ENCODE measurements at regions of chr18 and their contacts with region 1.

Region 1: GRCh38 chr18:22800551-22800951 is 132.6 kb upstream of the RBBP8 start:
- DNase-seq: no peak
- ATAC-seq: no peak
- H3K4me3 ChIP-seq: no peak overlapping the region
- H3K4me3 Mint-ChIP-seq: no peak overlapping the region
- H3K27ac ChIP-seq: no peak overlapping the region
- H3K27ac Mint-ChIP-seq: no peak overlapping the region
- H3K4me1 ChIP-seq: no peaks in the 10 kb centered on the region
- H3K4me1 Mint-ChIP-seq: no peaks in the 10 kb centered on the region
- H3K27me3 ChIP-seq: peaks cover 0 to 2% (median 0%) of the 10 kb centered on the region in 4 experiments
- H3K27me3 Mint-ChIP-seq: no peaks in the 10 kb centered on the region
- CTCF ChIP-seq: no peak

Region 2: DNA sequence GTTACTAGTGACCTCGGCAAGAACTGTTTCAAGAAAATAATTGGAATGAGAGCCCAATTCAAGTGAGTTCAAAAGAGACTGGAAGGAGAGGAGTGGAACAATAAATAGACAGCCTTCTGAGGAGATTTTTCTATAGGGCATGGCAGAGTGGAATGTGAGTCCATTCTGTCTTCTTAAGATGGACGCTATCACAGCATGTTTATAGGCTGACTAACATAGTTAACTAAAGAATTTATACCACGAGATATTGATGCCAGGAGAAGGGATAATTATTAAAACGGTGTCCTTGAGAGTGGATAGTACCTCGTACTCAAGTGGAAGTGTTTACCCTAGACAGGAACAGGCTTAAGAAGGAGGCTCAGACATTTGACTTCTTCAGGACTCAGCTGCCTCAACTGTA is 11.0 kb before region 1 on chr18:
- CTCF ChIA-PET with region 1: interaction called, 14 read pairs
- POLR2A ChIA-PET with region 1: no interaction called
- intact Hi-C with region 1: no loop called
- DNase-seq: no peak
- ATAC-seq: no peak
- H3K4me3 ChIP-seq: no peak overlapping the region
- H3K4me3 Mint-ChIP-seq: peak overlapping the region; percentile 20
- H3K27ac ChIP-seq: no peak overlapping the region
- H3K27ac Mint-ChIP-seq: no peak overlapping the region
- H3K4me1 ChIP-seq: peaks cover 25 to 28% of the 10 kb centered on the region in 2 donors
- H3K4me1 Mint-ChIP-seq: peaks cover 29% of the 10 kb centered on the region
- H3K27me3 ChIP-seq: no peaks in the 10 kb centered on the region
- H3K27me3 Mint-ChIP-seq: peaks cover 2% of the 10 kb centered on the region
- CTCF ChIP-seq: no peak

Region 3: DNA sequence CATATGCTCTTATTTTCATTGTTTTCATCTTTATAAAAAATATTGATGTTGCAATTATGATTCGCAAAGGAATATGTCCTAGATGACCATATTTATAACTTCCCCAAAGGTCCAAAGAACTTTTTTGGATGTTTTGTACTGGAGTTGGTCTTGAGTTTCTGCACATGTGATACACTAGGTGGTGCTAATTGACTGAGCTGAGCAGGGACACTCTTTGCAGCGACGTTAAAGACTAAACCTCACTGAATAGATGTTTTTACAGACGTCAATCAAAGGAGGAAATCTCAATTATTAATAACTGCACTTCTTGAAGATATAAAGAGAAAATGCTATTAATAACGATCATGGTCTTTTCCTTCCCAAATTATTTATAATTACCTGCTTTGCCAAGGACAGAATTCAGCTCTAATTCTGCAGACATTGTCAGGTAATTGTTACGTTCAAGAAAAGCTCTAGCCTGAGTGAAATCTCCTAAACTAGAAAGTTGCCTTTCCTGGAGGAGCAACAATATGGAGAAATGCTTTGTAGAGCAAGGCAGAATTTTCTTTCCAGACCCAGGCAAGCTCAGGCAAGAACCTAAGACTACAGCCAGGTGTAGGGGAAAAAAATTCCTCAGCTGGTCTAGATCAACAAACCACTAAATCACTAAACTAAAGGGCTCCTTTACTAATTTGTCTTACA is 13.2 kb after region 1 on chr18:
- CTCF ChIA-PET with region 1: interaction called, 12 read pairs
- POLR2A ChIA-PET with region 1: no interaction called
- intact Hi-C with region 1: no loop called
- DNase-seq: peak; percentile 44
- ATAC-seq: no peak
- H3K4me3 ChIP-seq: no peak overlapping the region
- H3K4me3 Mint-ChIP-seq: no peak overlapping the region
- H3K27ac ChIP-seq: no peak overlapping the region
- H3K27ac Mint-ChIP-seq: no peak overlapping the region
- H3K4me1 ChIP-seq: no peaks in the 10 kb centered on the region
- H3K4me1 Mint-ChIP-seq: no peaks in the 10 kb centered on the region
- H3K27me3 ChIP-seq: no peaks in the 10 kb centered on the region
- H3K27me3 Mint-ChIP-seq: peaks cover 16% of the 10 kb centered on the region
- CTCF ChIP-seq: peak; percentile 61